Posterior vena cava (tissue), 2 donors: ENCODE measurements at regions of chr2 and their contacts with region 1.

Region 1: GRCh38 chr2:5618271-5618670 is 73.9 kb upstream of the SOX11 start:
- DNase-seq: no peak

Region 2: DNA sequence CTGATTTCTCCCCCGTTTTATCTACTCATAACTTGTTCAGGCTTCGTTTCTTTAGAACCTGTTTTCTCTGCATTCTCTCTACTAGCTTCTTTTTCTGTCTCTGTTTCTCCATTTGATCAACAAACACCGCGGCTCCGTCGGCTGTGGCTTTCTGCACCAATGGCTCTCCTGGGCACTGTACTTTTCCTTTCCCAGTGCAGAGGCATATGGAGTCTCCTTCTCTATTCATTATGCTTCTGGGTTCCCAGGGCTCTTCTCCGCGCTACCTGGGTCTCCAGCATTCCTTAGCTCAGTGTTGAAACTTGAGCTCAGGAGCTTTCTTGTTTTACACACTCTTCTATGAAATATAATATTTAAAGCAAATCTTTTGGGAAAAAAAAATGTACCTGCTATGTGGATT is 122.7 kb before region 1 on chr2:
- intact Hi-C with region 1: no loop called
- DNase-seq: no peak

Region 3: GRCh38 chr2:5561006-5561405 is 57.3 kb before region 1 on chr2:
- intact Hi-C with region 1: no loop called
- DNase-seq: peak; percentile 86

Region 4: GRCh38 chr2:5589200-5589599 is 29.1 kb before region 1 on chr2:
- intact Hi-C with region 1: loop called in 1 of 2 experiments (anchors 1 kb)
- DNase-seq: no peak